ENCODE measurements at regions of chr5 and their contacts with region 1.

Region 1: GRCh38 chr5:159209438-159210305 is at the start of gene RNF145:
- DNase-seq: peak; percentile 88
- H3K4me3 Mint-ChIP-seq: peak within 1 kb of the TSS; percentile 88
- H3K27ac Mint-ChIP-seq: peak within 1 kb of the TSS; percentile 98
- H3K4me1 Mint-ChIP-seq: peaks cover 39% of the 10 kb centered on the region
- H3K27me3 Mint-ChIP-seq: no peaks in the 10 kb centered on the region
- total RNA-seq, gene RNF145: 126 to 127 TPM

Region 2: GRCh38 chr5:159163027-159163700 is 46.5 kb before region 1 on chr5:
- CTCF ChIA-PET with region 1: no interaction called
- POLR2A ChIA-PET with region 1: interaction called, 12 read pairs
- DNase-seq: no peak
- H3K4me3 Mint-ChIP-seq: no peak overlapping the region
- H3K27ac Mint-ChIP-seq: no peak overlapping the region
- H3K4me1 Mint-ChIP-seq: peaks cover 24% of the 10 kb centered on the region
- H3K27me3 Mint-ChIP-seq: no peaks in the 10 kb centered on the region

Region 3: DNA sequence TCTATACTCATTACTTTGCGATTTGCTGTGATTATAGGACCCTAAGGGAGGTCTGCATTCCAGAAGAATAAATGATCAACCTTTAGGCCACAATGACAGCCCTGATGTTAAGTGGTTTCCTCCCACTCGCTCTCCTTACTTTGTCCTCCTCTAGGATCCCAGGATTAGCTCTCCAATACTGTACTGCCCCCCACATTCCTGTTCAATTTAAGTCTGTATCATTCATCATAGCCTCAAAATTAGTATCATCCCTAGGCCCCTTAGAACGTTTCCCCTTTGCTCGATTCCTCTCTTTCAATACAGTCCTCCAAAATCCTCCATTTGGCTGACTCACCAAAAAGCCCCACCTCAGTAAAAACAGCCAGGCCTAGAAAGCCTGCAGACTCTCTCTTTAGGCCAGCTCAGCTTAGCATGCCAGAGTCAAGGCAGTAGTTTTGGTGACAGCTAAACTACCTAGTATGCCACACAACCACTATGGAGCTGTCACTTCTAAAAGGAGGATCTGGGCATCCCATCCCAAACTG is 24.8 kb before region 1 on chr5:
- CTCF ChIA-PET with region 1: no interaction called
- POLR2A ChIA-PET with region 1: interaction called, 46 read pairs
- DNase-seq: no peak
- H3K4me3 Mint-ChIP-seq: no peak overlapping the region
- H3K27ac Mint-ChIP-seq: peak overlapping the region; percentile 4
- H3K4me1 Mint-ChIP-seq: peaks cover 47% of the 10 kb centered on the region
- H3K27me3 Mint-ChIP-seq: no peaks in the 10 kb centered on the region

Region 4: GRCh38 chr5:159262859-159263567 is 53.3 kb after region 1 on chr5 and contains the start of gene UBLCP1:
- CTCF ChIA-PET with region 1: interaction called, 3 read pairs
- POLR2A ChIA-PET with region 1: interaction called, 24 read pairs
- DNase-seq: peak; percentile 83
- H3K4me3 Mint-ChIP-seq: peak within 1 kb of the TSS; percentile 86
- H3K27ac Mint-ChIP-seq: peak within 1 kb of the TSS; percentile 95
- H3K4me1 Mint-ChIP-seq: peaks cover 32% of the 10 kb centered on the region
- H3K27me3 Mint-ChIP-seq: no peaks in the 10 kb centered on the region
- total RNA-seq, gene UBLCP1: 27.8 to 31.0 TPM

Region 5: DNA sequence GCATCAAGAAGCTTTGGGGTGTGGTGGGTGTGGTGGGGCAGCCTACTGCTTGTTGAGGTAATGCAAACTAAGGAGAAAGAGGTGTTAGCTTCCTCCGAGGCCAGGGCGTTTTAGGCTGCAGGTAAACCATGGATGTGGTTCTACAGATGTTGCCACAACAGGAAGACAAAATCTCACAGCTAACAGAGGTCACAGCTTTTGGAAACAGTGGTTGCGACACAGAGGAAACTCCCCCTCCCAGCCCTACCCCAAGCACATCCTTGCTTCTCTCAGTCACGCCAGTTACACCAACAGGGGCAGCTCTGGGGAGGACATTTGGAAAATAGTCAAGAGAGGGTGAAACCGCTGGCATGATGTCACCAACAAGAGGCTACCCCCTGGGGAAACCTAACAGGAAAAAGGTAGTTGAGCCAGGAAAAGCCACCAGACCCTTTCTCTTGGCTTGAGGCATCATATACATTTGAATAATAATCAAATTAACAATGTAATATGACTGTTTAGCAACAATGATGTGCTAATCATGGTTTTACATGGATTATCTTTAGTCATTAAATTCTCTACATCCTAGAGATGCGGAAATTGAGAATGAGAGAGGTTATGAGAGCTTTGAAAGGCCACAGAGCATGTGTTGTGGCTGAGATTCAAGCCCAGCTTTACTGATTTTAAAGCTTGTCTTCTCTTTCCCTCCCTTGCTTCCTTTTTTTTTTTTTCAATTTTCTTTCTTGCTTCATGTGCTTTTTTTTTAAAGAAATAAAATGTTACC is 202.8 kb after region 1 on chr5:
- CTCF ChIA-PET with region 1: no interaction called
- POLR2A ChIA-PET with region 1: interaction called, 22 read pairs
- DNase-seq: peak; percentile 89
- H3K4me3 Mint-ChIP-seq: peak overlapping the region; percentile 34
- H3K27ac Mint-ChIP-seq: peak overlapping the region; percentile 88
- H3K4me1 Mint-ChIP-seq: peaks cover 65% of the 10 kb centered on the region
- H3K27me3 Mint-ChIP-seq: peaks cover 44% of the 10 kb centered on the region